Dorsolateral prefrontal cortex (tissue), 120 donors: ENCODE measurements at regions of chr12 and their contacts with region 1.

Region 1: DNA sequence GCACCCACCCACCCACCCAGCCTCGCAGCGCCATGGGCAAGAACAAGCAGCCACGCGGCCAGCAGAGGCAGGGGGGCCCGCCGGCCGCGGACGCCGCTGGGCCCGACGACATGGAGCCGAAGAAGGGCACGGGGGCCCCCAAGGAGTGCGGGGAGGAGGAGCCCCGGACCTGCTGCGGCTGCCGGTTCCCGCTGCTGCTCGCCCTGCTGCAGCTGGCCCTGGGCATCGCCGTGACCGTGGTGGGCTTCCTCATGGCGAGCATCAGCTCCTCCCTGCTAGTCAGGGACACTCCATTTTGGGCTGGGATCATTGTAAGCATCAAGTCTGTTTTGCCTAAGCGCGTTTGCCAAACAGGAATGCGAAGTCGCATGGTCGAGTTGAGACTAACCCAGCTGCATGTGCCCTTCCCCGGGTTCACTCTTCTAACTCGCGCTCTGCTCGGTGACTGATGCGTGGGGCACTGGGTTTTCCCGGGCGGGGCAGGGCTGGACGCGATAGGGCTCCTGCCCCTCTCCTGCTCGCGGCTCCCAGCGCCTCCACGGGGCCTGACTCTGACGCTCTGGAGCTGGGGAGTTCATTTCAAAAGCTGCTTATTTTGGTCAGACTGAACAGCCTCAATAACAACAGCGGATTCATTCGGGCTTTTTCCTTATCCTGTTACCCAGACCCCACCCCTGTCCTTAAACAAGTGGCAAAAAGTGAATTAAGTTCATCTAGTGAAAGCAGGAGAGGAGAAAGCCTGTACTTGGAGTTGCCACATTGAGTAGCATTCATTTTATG is 458 bp downstream of the SSPN start:
- DNase-seq: peak; percentile 55 to 81 (median 66)
- H3K4me3 ChIP-seq: peak overlapping the region; percentile 41 to 89 (median 76)
- H3K27ac ChIP-seq: peak overlapping the region; percentile 78 to 99 (median 96)
- H3K27me3 ChIP-seq: no peaks in the 10 kb centered on the region
- CTCF ChIP-seq: peak in 2 of 56 donors; percentile 12 to 20

Region 2: GRCh38 chr12:26177283-26177682 is 18.5 kb before region 1 on chr12:
- intact Hi-C with region 1: no loop called
- DNase-seq: no peak
- H3K4me3 ChIP-seq: no peak overlapping the region
- H3K27ac ChIP-seq: no peak overlapping the region
- H3K27me3 ChIP-seq: peaks cover 0 to 6% (median 0%) of the 10 kb centered on the region in 45 donors
- CTCF ChIP-seq: no peak

Region 3: GRCh38 chr12:26239122-26239851 is 43.5 kb after region 1 on chr12:
- intact Hi-C with region 1: loop called in 1 of 2 experiments (anchors 5 kb)
- DNase-seq: peak; percentile 34 to 74 (median 64)
- H3K4me3 ChIP-seq: peak overlapping the region in 8 of 59 donors; percentile 0 to 30 (median 12)
- H3K27ac ChIP-seq: peak overlapping the region; percentile 40 to 96 (median 85)
- H3K27me3 ChIP-seq: peaks cover 0 to 3% (median 0%) of the 10 kb centered on the region in 45 donors
- CTCF ChIP-seq: peak in 1 of 56 donors; percentile 10

Region 4: DNA sequence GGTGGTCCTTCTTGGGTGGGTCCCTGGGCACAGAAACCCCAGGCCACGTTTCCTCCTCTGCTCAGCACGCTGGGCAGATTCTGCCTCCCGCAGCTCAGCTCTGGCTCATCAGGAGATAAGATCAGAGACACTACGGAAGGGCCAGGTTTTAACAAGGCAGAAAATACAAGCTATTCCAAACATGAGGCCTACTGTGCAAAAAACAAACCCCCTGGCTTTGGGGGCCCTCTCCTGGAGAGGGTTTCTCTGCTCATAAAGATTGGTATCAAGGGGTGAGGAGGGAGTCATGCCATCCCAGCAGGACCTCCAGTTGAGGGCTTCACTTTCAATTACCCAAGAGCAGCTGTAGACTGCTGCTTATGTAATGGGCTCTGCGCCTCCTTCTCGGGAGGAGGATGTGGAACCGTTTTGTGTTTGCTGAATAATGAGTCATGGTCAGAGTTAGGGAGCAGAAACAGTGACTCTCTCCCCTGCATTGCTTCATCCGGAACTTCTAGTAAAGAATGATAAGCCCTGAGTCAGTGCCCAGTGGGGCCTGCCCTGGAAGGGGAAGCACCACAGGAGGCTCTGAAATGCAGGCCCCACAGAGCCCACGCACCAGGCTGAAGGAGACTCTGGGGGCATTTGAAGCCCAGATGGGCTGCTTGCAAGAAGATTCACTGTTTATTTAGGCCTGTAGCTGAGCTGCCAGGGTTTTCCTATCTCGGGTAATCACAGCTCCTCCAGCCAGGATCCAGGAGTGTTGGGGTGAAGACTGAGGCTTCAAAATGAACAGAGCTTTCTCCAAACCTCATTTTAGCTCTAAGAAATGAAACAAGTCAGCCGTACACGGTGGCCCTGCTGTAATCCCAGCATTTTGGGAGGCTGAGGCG is 78.8 kb after region 1 on chr12:
- intact Hi-C with region 1: loop called in 1 of 2 experiments (anchors 10 kb)
- DNase-seq: peak in 8 of 10 donors; percentile 47 to 79 (median 65)
- H3K4me3 ChIP-seq: peak overlapping the region in 2 of 59 donors; percentile 3 to 16
- H3K27ac ChIP-seq: peak overlapping the region; percentile 26 to 94 (median 86)
- H3K27me3 ChIP-seq: no peaks in the 10 kb centered on the region
- CTCF ChIP-seq: peak in 31 of 56 donors; percentile 7 to 48 (median 26)